GM10248 (cell line): ENCODE measurements at regions of chr14 and their contacts with region 1.

Region 1: GRCh38 chr14:91323671-91324605 is 79.4 kb upstream of the GPR68 start:
- DNase-seq: peak; percentile 82
- CTCF ChIP-seq: peak; percentile 88

Region 2: DNA sequence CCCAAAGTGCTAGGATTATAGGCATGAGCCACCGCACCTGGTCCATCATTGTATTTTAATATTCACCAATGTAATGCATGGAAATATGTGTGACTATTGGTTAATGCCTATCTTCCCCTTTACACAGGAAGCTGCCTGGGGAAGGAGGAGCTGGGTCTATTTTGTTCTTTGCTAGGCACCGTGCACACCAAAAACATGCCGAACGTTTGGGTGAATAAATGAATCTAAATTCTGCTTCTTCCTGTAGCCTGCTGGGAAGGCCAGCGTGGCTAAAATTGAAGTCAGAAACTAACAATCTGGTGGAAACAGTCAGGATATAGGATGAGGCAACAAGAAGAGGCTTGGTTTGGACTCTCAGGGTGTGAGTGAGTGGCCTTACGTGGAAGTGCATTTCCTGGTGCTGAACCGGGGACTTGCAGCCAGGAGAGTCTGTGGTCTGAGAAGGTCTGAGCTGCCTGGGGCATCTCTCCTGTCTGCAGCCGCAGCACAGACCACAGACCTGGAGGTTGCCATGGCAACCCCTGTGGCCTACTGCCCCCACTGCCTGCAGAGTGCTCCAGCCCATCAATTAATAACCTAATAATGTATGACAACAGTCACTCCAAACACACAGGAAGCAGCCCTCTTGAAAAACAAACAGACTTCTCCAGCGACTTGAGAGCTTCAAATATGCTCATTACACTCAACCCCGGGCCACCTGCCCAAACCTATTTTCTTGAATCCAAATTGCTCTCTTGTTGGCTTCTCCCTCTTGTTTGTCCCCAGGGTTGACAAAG is 73.9 kb before region 1 on chr14:
- CTCF ChIA-PET with region 1: no interaction called
- POLR2A ChIA-PET with region 1: no interaction called
- DNase-seq: peak; percentile 82
- CTCF ChIP-seq: no peak

Region 3: GRCh38 chr14:91263329-91263728 is 60.6 kb before region 1 on chr14:
- CTCF ChIA-PET with region 1: no interaction called
- POLR2A ChIA-PET with region 1: no interaction called
- DNase-seq: no peak
- CTCF ChIP-seq: no peak

Region 4: DNA sequence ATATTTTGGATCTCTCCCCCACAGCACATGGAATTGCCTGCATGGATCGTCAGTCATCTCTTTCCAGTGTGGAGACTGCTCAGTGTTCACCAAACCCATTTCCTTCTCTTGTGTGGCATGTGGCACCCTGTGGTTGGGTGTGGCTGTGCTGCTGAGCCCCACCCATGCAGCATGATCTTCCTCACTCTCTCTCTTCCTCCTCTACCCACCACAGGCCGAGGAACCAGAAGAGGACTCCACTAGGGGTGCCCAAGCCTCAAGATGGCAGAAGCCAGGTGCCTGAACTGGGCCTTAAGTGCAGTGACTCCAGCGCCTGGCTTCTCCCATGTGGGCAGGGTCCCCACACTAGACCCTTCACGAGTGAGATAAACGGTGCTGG is 12.7 kb before region 1 on chr14:
- CTCF ChIA-PET with region 1: interaction called, 23 read pairs
- POLR2A ChIA-PET with region 1: no interaction called
- DNase-seq: no peak
- CTCF ChIP-seq: no peak

Region 5: DNA sequence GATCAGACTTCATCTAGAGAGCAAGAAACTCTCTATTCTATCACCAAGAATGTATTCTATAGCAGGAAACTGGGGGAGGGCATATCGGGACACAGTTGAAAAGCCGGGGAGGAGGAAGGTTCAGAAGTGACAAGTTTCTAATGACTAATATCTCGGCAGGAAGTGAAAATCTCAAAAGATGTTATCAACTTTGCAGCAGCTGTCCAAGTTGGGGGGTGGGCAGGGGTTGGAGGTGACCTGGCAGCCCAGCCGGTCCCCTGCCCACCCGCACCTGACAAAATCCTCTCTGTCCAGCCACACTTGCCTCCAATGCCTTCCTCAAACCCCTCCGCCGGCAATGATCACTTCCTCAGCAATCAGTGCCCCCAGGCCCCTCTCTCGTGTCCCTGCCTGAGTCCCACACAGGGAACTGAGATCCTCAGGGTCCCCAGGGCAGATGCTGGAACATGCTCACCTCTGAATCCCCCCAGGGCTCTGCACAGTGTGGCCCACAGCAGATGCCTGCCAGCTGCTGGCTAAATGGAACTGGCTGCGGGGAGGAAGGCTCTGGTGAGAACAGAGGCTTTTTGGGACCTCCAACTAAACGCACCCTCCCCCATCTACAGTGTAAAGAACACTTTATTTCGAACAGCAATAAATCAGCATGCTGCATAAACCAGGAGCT is 49.8 kb after region 1 on chr14:
- CTCF ChIA-PET with region 1: interaction called, 29 read pairs
- POLR2A ChIA-PET with region 1: no interaction called
- DNase-seq: peak; percentile 85
- CTCF ChIP-seq: no peak

Region 6: DNA sequence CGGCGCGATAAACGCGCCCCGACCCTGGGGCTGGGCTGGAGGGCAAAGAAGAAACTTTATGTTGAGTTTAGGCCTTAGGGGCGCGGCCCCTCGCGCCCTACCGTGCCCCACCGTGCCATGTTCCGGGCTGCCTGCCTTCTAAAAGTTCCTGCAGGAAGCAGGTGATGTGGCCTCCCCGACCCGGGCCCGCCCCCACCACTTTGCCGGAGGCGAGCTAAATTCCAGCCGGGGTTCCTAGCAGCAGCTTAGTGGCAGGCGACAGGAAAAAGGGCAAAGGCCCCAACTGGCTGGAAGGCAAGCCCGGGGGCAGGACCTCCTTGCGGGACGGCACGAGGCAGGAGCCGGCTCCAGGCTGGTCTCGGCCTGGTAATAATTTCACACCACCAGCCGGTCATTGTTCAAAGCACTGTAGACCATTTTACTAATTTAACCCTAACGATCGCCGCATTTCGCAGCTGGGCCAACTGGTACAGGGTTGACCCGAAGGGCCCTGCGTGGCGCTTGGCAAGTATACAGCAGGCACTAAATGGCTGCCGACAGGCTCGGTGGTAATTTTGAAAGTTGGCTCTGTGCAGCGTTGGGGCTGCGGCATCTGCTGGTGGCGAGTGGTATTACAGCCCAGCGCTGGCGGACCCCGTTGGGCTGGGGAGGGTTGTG is 94.6 kb after region 1 on chr14:
- CTCF ChIA-PET with region 1: interaction called, 180 read pairs
- POLR2A ChIA-PET with region 1: interaction called, 7 read pairs
- DNase-seq: peak; percentile 56
- CTCF ChIP-seq: peak; percentile 91